ENCODE measurements at regions of chr2 and their contacts with region 1.

Region 1: GRCh38 chr2:176653479-176654443 is 384.5 kb downstream of the MTX2 start:
- DNase-seq: peak; percentile 74
- ATAC-seq: peak; percentile 98
- H3K4me3 Mint-ChIP-seq: 0 out of 2 replicates have a peak overlapping the region, but pooled peaks have one; percentile 21
- H3K27ac Mint-ChIP-seq: no peak overlapping the region
- H3K4me1 Mint-ChIP-seq: peaks cover 39% of the 10 kb centered on the region
- H3K27me3 Mint-ChIP-seq: peaks cover 16% of the 10 kb centered on the region
- CTCF ChIP-seq: peak; percentile 91

Region 2: DNA sequence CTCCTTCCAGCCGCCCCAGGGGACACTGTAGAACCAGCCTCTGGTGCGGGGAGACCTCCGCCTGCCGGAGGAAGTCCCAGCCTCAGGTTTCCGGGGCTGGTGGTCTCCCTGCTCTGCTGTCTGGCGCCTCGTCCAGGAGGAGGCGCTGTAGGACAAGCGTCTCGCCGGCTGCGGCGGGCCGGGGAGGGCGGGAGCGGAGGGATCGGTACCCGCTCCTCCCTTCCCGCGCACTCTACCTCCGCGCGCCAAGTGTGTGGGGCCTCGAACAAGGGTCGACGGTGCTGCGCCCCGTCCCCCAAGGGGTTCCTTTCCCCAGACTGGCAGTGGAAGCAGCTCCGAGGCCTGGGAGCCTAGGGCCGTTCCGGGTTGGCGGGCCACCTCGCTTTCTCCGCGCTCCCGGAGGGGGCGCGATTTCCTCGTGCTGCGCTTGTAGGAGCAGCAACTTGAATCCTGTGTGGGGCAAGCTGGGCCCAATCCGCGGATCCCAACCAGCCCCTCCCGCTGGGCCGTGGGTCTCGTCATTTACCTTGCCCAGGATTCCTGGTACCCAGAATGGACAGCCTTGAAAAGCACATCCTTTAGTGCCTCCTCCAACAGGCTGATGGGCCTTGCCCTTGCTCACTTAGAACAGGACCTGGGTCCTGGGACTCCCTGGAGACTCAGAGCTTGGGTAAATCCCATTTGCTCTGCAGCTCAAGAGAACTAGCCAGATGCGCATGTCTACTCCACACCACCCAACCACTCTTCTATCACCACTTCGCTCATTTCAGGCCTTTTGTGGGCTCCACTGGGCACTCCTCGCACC is 513.0 kb before region 1 on chr2:
- CTCF ChIA-PET with region 1: interaction called, 29 read pairs
- POLR2A ChIA-PET with region 1: no interaction called
- DNase-seq: peak; percentile 88
- ATAC-seq: peak; percentile 81
- H3K4me3 Mint-ChIP-seq: peak overlapping the region; percentile 62
- H3K27ac Mint-ChIP-seq: no peak overlapping the region
- H3K4me1 Mint-ChIP-seq: peaks cover 6% of the 10 kb centered on the region
- H3K27me3 Mint-ChIP-seq: peaks cover 98% of the 10 kb centered on the region
- CTCF ChIP-seq: peak; percentile 91

Region 3: DNA sequence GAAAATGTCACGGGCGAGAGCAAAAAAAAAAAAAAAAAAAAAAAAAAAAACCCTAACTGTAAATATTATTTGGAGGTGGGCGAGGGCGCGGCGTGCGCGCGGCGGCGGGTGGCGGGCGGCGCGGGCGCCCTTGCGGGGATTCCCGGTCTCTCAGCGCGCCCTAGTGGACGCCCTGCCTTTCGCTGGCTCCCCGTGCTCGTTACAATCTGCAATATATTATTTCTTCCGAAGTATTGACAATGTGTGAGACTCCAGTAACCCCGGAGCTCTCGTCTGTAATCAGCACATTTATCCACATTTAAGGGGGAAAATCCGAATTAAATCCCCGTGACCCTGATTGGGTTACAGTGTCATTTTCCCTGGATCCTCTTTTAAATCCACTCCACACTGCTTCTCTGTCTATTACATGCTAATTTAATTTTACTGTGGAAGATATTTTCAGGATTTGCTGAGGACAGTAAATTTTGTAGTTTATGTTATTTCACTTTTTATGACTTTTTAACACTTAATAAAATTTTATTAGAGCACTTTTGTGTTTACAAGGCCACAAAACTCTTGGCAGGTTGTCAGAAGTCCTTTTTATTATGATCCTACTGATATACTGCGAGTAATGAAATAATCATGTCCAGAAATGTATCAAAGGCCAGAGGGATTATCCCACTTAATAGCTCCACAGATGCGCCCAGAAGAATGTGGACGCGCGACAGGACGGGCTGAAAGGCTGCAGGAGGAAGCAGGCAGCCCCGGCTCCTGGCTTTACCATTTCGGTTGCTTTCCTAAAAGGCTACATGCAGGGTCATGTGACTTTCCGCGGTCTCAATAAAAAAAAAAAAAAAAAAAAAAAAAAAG is 15.4 kb before region 1 on chr2:
- CTCF ChIA-PET with region 1: interaction called, 27 read pairs
- POLR2A ChIA-PET with region 1: no interaction called
- DNase-seq: peak; percentile 59
- ATAC-seq: peak; percentile 70
- H3K4me3 Mint-ChIP-seq: peak overlapping the region; percentile 69
- H3K27ac Mint-ChIP-seq: no peak overlapping the region
- H3K4me1 Mint-ChIP-seq: peaks cover 20% of the 10 kb centered on the region
- H3K27me3 Mint-ChIP-seq: peaks cover 94% of the 10 kb centered on the region
- CTCF ChIP-seq: peak; percentile 73

Region 4: GRCh38 chr2:176664478-176664877 is 10.7 kb after region 1 on chr2:
- CTCF ChIA-PET with region 1: interaction called, 27 read pairs
- POLR2A ChIA-PET with region 1: no interaction called
- DNase-seq: no peak
- ATAC-seq: no peak
- H3K4me3 Mint-ChIP-seq: no peak overlapping the region
- H3K27ac Mint-ChIP-seq: no peak overlapping the region
- H3K4me1 Mint-ChIP-seq: peaks cover 12% of the 10 kb centered on the region
- H3K27me3 Mint-ChIP-seq: peaks cover 67% of the 10 kb centered on the region
- CTCF ChIP-seq: no peak

Region 5: GRCh38 chr2:176679061-176679669 is 25.4 kb after region 1 on chr2:
- CTCF ChIA-PET with region 1: interaction called, 31 read pairs
- POLR2A ChIA-PET with region 1: interaction called, 3 read pairs
- DNase-seq: no peak
- ATAC-seq: no peak
- H3K4me3 Mint-ChIP-seq: no peak overlapping the region
- H3K27ac Mint-ChIP-seq: no peak overlapping the region
- H3K4me1 Mint-ChIP-seq: peaks cover 38% of the 10 kb centered on the region
- H3K27me3 Mint-ChIP-seq: peaks cover 15% of the 10 kb centered on the region
- CTCF ChIP-seq: no peak

Region 6: DNA sequence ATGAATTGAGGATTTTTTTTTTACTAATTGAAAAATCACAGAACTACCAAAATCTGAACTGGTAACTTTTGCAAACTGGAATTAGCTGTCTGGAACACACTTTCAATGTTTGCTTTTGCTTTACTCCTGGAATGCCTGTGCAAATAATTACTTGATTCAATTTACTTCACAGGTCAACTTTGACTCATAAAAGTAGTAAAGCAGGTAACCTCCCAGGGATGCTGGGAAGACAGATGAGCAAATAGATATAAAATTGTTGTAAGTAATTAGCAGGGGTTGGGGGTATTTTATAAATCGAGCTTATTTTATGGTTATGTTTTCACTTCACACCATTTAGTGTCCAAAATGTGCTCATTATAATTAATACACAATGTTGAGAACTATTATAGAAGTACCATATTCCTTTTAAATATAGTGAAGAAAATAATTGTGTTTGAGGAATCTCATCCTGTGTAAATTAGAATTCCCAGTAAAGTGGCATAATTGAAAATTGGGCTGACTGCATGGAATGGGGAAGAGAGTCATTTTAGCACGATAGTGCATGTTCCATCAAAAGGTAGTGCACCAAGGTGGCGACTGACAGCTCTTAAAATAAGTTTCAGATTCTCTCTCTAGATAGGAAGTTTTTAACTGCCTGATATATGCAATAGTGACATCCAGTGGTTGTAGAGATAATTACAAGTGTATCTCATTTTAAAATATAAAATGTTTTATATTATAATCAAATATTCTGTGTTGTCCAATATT is 160.7 kb after region 1 on chr2:
- CTCF ChIA-PET with region 1: interaction called, 117 read pairs
- POLR2A ChIA-PET with region 1: no interaction called
- DNase-seq: no peak
- ATAC-seq: no peak
- H3K4me3 Mint-ChIP-seq: no peak overlapping the region
- H3K27ac Mint-ChIP-seq: no peak overlapping the region
- H3K4me1 Mint-ChIP-seq: peaks cover 57% of the 10 kb centered on the region
- H3K27me3 Mint-ChIP-seq: no peaks in the 10 kb centered on the region; the same call in 1 of the 2 replicates
- CTCF ChIP-seq: peak; percentile 44; the same call in 1 of the 2 replicates

Region 7: GRCh38 chr2:176910828-176911227 is 257.1 kb after region 1 on chr2:
- CTCF ChIA-PET with region 1: no interaction called
- POLR2A ChIA-PET with region 1: no interaction called
- DNase-seq: no peak
- ATAC-seq: no peak
- H3K4me3 Mint-ChIP-seq: no peak overlapping the region
- H3K27ac Mint-ChIP-seq: no peak overlapping the region
- H3K4me1 Mint-ChIP-seq: no peaks in the 10 kb centered on the region
- H3K27me3 Mint-ChIP-seq: no peaks in the 10 kb centered on the region
- CTCF ChIP-seq: no peak

Region 8: GRCh38 chr2:177275041-177276020 is 621.6 kb after region 1 on chr2:
- CTCF ChIA-PET with region 1: no interaction called
- POLR2A ChIA-PET with region 1: no interaction called
- DNase-seq: no peak
- ATAC-seq: no peak
- H3K4me3 Mint-ChIP-seq: no peak overlapping the region
- H3K27ac Mint-ChIP-seq: no peak overlapping the region
- H3K4me1 Mint-ChIP-seq: peaks cover 15% of the 10 kb centered on the region
- H3K27me3 Mint-ChIP-seq: no peaks in the 10 kb centered on the region
- CTCF ChIP-seq: no peak